ENCODE measurements at regions of chr2 and their contacts with region 1.

Region 1: GRCh38 chr2:184137955-184138354 is 460.4 kb upstream of the ZNF804A start:
- DNase-seq: peak; percentile 67

Region 2: GRCh38 chr2:183530333-183530901 is 607.5 kb before region 1 on chr2:
- intact Hi-C with region 1: no loop called
- DNase-seq: no peak

Region 3: GRCh38 chr2:184304006-184304405 is 166.1 kb after region 1 on chr2:
- intact Hi-C with region 1: loop called in 1 of 2 experiments (anchors 10 kb)
- DNase-seq: no peak